Activated T-helper 2 cell treated with anti-CD3 and anti-CD28 coated beads, Interferon-gamma antibody, Interleukin-2, Interleukin-4, amounts not matched to agents 10 μg/mL and 5 μg/mL and 100 μg/mL, durations not matched to agents 14 hours and 24 hours and 36 hours (primary cell): ENCODE measurements at regions of chr20 and their contacts with region 1.

Region 1: GRCh38 chr20:2984956-2985661 is 58.3 kb upstream of the GNRH2 start:
- DNase-seq: no peak
- H3K4me3 Mint-ChIP-seq: no peak overlapping the region
- H3K27ac Mint-ChIP-seq: no peak overlapping the region
- H3K4me1 Mint-ChIP-seq: peaks cover 40% of the 10 kb centered on the region
- H3K27me3 Mint-ChIP-seq: no peaks in the 10 kb centered on the region

Region 2: DNA sequence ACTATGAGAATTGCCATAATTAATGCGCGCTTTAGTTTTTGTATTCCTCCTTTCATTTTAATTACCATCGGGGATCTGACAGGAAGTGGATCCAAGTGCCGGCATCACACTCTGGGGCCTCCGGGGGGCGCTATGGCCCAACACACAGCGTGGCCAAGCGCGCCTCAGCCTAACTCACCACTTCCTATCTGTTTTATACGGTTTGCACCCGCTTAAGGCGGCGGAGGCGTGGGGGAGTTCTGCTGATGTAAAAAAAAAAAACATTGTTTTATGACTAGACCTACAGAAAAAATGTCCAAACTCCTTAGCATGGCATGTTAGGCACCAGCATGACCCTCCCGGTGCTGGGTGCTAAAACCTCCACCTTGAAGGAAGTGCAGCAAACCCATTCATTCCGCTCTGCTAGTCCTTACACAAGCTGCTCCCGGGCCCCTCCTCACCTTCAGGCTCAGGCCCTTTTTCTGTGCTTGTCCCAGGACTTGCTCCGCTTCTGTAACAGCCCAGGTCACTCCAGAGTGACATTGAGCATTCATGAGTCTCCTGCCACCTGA is 297.0 kb before region 1 on chr20:
- intact Hi-C with region 1: loop called (anchors 10 kb)
- DNase-seq: peak; percentile 75
- H3K4me3 Mint-ChIP-seq: peak overlapping the region; percentile 38
- H3K27ac Mint-ChIP-seq: peak overlapping the region; percentile 60
- H3K4me1 Mint-ChIP-seq: peaks cover 28% of the 10 kb centered on the region
- H3K27me3 Mint-ChIP-seq: peaks cover 32% of the 10 kb centered on the region

Region 3: GRCh38 chr20:2914160-2914559 is 70.9 kb before region 1 on chr20:
- intact Hi-C with region 1: loop called (anchors 1 kb)
- DNase-seq: no peak
- H3K4me3 Mint-ChIP-seq: no peak overlapping the region
- H3K27ac Mint-ChIP-seq: no peak overlapping the region
- H3K4me1 Mint-ChIP-seq: peaks cover 11% of the 10 kb centered on the region
- H3K27me3 Mint-ChIP-seq: no peaks in the 10 kb centered on the region

Region 4: DNA sequence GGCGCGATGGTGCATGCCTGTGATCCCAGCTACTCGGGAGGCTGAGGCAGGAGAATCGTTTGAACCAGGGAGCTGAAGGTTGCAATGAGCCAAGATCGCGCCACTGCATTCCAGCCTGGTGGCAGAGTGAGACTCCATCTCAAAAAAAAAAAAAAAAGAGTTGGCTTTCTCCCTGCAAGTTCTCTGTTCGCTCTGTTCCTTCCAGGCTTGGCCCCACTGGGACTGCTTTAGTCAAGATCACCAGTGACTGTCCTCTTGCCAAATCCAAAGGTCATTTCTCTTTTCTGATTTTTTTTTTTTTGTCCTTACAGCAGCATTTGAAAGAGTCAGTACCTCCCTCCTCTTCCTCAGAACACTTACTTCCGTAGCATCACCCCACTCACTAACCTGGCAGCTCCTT is 47.5 kb after region 1 on chr20:
- intact Hi-C with region 1: loop called (anchors 5 kb)
- DNase-seq: no peak
- H3K4me3 Mint-ChIP-seq: no peak overlapping the region
- H3K27ac Mint-ChIP-seq: no peak overlapping the region
- H3K4me1 Mint-ChIP-seq: peaks cover 4% of the 10 kb centered on the region
- H3K27me3 Mint-ChIP-seq: no peaks in the 10 kb centered on the region

Region 5: GRCh38 chr20:3156811-3157619 is 171.9 kb after region 1 on chr20:
- intact Hi-C with region 1: loop called (anchors 2 kb)
- DNase-seq: no peak
- H3K4me3 Mint-ChIP-seq: peak overlapping the region; percentile 76
- H3K27ac Mint-ChIP-seq: peak overlapping the region; percentile 85
- H3K4me1 Mint-ChIP-seq: peaks cover 37% of the 10 kb centered on the region
- H3K27me3 Mint-ChIP-seq: no peaks in the 10 kb centered on the region